ENCODE measurements at regions of chr10 and their contacts with region 1.

Region 1: GRCh38 chr10:99711129-99711719 is 20.7 kb downstream of the COX15 start:
- DNase-seq: peak; percentile 29 to 78
- H3K4me3 ChIP-seq: no peak overlapping the region
- H3K27ac ChIP-seq: no peak overlapping the region
- H3K4me1 ChIP-seq: peaks cover 0 to 21% (median 4%) of the 10 kb centered on the region in 4 donors
- H3K27me3 ChIP-seq: no peaks in the 10 kb centered on the region
- CTCF ChIP-seq: peak in 3 of 7 experiments; percentile 6 to 35 (median 24)
- EP300 ChIP-seq: no peak
- POLR2A ChIP-seq: no peak

Region 2: GRCh38 chr10:99303899-99304861 is 407.0 kb before region 1 on chr10:
- intact Hi-C with region 1: no loop called
- DNase-seq: peak in 1 of 2 donors; percentile 51
- H3K4me3 ChIP-seq: no peak overlapping the region
- H3K27ac ChIP-seq: no peak overlapping the region
- H3K4me1 ChIP-seq: peaks cover 0 to 13% (median 5%) of the 10 kb centered on the region in 4 donors
- H3K27me3 ChIP-seq: no peaks in the 10 kb centered on the region
- CTCF ChIP-seq: no peak
- EP300 ChIP-seq: no peak
- POLR2A ChIP-seq: no peak

Region 3: DNA sequence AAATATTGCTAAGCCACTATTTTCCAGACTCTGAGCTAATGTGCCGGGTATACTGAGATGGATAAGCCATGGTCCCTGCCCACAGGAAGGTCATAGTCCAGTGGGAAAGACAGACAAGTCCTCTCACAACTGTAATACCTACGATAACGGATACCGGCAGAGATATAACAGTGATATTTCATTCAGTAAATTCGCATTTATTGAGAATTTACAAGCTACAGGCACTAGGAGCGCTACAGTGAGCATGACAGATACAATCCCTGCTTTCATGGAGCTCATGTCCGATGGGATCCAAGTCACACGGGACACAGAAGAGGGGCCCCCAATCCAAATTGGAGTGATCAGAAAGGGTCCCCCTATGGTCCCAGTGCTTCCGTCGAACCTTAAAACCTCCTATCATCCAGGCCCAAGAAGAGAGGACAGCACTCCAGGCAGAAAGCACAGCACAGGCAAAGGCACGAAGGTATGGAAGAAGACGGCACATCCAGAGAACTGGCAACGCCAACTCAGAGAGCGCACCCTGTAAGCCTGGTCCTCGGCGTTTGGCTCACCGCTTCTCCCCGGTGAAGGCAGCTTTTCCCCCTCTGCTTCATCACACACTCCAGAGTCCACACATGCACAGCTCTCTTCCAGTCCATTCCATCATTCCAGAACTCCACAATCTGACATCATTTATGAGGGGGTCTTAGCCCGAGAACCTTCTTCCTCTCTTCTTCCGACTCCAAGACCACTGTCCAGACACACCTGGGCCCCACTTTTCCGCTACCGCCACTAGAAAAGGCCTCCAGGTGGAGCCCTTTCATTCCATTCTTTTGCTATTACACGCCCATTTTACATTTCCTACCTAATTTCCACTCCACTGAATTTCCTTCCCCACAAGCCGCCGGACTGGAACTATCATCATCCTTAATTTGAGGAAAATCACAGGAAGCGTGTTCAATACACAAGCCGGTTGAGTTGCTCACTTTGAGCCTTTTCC is 226.3 kb before region 1 on chr10:
- intact Hi-C with region 1: no loop called
- DNase-seq: peak in 1 of 2 donors; percentile 13
- H3K4me3 ChIP-seq: no peak overlapping the region
- H3K27ac ChIP-seq: no peak overlapping the region
- H3K4me1 ChIP-seq: no peaks in the 10 kb centered on the region
- H3K27me3 ChIP-seq: peaks cover 0 to 58% (median 3%) of the 10 kb centered on the region in 3 donors
- CTCF ChIP-seq: peak in 1 of 7 experiments; percentile 14
- EP300 ChIP-seq: no peak
- POLR2A ChIP-seq: no peak

Region 4: GRCh38 chr10:99630439-99630838 is 80.8 kb before region 1 on chr10:
- intact Hi-C with region 1: loop called (anchors 10 kb)
- DNase-seq: peak; percentile 58 to 76
- H3K4me3 ChIP-seq: no peak overlapping the region
- H3K27ac ChIP-seq: no peak overlapping the region
- H3K4me1 ChIP-seq: no peaks in the 10 kb centered on the region
- H3K27me3 ChIP-seq: no peaks in the 10 kb centered on the region
- CTCF ChIP-seq: peak in 4 of 7 experiments; percentile 16 to 57 (median 28)
- EP300 ChIP-seq: no peak
- POLR2A ChIP-seq: no peak

Measured in stomach (tissue), 19 donors.